ENCODE measurements at regions of chr18 and their contacts with region 1.

Region 1: DNA sequence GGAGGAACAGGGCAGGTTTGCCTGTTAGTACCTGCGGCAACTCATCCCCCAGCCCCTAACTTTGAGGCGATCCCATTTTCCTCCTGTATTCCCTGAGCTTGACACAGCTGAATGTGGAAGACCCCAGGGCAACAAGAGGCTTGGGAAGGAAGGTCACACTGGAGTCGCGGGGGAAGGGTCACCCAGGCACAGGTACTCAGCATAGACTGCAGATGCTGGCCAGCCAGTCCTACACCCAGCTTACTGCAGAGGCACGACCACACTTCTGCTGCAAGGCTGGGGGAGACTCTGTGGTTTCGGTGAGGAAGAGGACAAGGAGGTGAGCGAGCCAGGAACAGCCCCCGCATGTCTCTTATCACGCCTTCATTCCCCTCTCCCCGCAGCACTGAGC is 91.5 kb downstream of the MALT1 start:
- DNase-seq: no peak
- H3K4me3 Mint-ChIP-seq: no peak overlapping the region
- H3K27ac Mint-ChIP-seq: no peak overlapping the region
- H3K4me1 Mint-ChIP-seq: peaks cover 35% of the 10 kb centered on the region
- H3K27me3 Mint-ChIP-seq: peaks cover 29% of the 10 kb centered on the region

Region 2: GRCh38 chr18:58529714-58530354 is 232.9 kb before region 1 on chr18:
- CTCF ChIA-PET with region 1: interaction called, 28 read pairs
- POLR2A ChIA-PET with region 1: interaction called, 4 read pairs
- DNase-seq: peak; percentile 71
- H3K4me3 Mint-ChIP-seq: no peak overlapping the region
- H3K27ac Mint-ChIP-seq: no peak overlapping the region
- H3K4me1 Mint-ChIP-seq: peaks cover 4% of the 10 kb centered on the region
- H3K27me3 Mint-ChIP-seq: peaks cover 19% of the 10 kb centered on the region

Region 3: DNA sequence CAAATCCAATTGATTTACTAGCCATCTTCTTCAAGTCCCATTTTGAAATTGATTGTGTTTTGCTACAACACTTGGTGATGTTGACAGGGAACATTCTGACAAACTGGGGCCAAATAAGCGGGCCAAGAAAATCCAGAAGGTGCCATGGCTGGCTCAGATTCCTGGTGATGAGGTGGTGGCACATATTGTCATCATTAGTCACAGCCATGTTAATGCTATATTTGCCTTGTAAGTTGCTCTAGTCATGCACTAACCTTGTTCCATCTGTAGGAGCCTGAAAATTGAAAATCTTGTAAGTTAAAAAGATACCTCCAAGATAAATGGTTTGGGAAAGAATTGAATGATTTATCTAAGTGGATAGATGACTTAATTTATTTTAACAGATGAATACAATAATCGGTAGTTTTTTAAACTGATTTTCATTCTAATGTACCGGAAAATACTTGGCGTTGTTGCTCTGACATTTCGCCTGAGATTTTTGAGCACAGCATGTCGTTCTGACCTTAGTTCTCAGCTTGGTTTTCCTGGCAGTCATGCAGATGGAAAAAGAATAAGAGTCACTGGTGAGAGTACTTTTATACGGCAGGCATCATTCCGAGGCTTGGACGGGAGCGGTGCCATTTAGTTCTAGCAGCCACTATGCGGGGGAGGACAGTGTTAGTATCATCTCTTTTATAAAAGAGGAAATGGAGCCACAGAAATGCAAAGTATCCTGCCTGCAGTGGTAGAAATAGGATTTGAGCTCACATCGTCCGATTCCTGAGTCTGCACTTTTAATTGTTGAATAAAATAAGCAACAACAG is 235.8 kb after region 1 on chr18:
- CTCF ChIA-PET with region 1: no interaction called
- POLR2A ChIA-PET with region 1: no interaction called
- DNase-seq: no peak
- H3K4me3 Mint-ChIP-seq: no peak overlapping the region
- H3K27ac Mint-ChIP-seq: no peak overlapping the region
- H3K4me1 Mint-ChIP-seq: no peaks in the 10 kb centered on the region
- H3K27me3 Mint-ChIP-seq: peaks cover 10% of the 10 kb centered on the region

Measured in activated CD4-positive, alpha-beta T cell treated with anti-CD3 and anti-CD28 coated beads, Interleukin-2, amount 10 ng/mL, durations not matched to agents 7 days and 5 days (primary cell).